ENCODE measurements at regions of chr20 and their contacts with region 1.

Region 1: GRCh38 chr20:3010985-3011723 is 32.3 kb upstream of the GNRH2 start:
- DNase-seq: peak; percentile 50
- H3K4me3 Mint-ChIP-seq: no peak overlapping the region
- H3K27ac Mint-ChIP-seq: peak overlapping the region; percentile 73
- H3K4me1 Mint-ChIP-seq: peaks cover 35% of the 10 kb centered on the region
- H3K27me3 Mint-ChIP-seq: no peaks in the 10 kb centered on the region

Region 2: GRCh38 chr20:2637246-2637645 is 373.9 kb before region 1 on chr20:
- CTCF ChIA-PET with region 1: no interaction called
- intact Hi-C with region 1: no loop called
- DNase-seq: no peak
- H3K4me3 Mint-ChIP-seq: no peak overlapping the region
- H3K27ac Mint-ChIP-seq: no peak overlapping the region
- H3K4me1 Mint-ChIP-seq: peaks cover 3% of the 10 kb centered on the region
- H3K27me3 Mint-ChIP-seq: no peaks in the 10 kb centered on the region

Region 3: DNA sequence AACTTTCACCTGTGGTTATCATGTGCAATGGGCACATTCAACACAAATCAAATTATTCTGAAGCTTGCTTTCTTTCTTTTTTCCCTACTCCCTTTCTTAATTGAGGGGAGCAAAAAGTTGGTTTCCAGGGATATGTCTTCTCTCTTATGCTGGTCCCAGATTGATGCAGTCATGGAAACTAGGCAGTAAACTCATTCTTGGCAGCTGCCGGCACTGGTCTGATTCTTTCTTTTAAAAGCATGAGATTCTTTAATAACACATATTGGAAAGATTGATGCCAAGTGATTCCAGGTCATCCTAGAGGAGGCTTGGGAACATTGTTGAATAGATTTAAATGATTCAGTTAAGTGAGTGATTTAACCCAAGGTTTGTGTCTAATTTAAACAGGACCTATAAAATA is 108.9 kb before region 1 on chr20:
- CTCF ChIA-PET with region 1: no interaction called
- intact Hi-C with region 1: no loop called
- DNase-seq: no peak
- H3K4me3 Mint-ChIP-seq: no peak overlapping the region
- H3K27ac Mint-ChIP-seq: no peak overlapping the region
- H3K4me1 Mint-ChIP-seq: peaks cover 36% of the 10 kb centered on the region
- H3K27me3 Mint-ChIP-seq: no peaks in the 10 kb centered on the region

Region 4: DNA sequence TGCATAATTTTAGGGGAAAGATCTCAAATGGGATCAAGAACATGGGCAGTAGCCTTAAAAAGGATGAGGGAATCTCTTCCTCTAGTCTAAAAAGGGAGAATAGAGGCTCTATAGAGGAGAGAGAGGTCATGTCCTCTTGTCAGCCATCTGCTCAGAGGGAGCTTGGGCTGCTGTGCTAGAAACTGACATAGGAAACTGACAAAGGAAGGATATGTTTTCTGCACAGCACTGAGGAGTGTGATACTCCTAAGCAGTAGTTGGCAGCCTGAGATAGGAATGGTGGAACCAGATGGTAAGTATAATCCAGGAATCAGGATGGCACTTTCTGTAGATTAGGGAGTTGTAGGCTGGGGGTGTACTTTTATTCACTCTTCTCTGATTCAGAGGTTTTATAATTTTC is 78.7 kb before region 1 on chr20:
- CTCF ChIA-PET with region 1: no interaction called
- intact Hi-C with region 1: no loop called
- DNase-seq: no peak
- H3K4me3 Mint-ChIP-seq: no peak overlapping the region
- H3K27ac Mint-ChIP-seq: no peak overlapping the region
- H3K4me1 Mint-ChIP-seq: no peaks in the 10 kb centered on the region
- H3K27me3 Mint-ChIP-seq: no peaks in the 10 kb centered on the region

Region 5: DNA sequence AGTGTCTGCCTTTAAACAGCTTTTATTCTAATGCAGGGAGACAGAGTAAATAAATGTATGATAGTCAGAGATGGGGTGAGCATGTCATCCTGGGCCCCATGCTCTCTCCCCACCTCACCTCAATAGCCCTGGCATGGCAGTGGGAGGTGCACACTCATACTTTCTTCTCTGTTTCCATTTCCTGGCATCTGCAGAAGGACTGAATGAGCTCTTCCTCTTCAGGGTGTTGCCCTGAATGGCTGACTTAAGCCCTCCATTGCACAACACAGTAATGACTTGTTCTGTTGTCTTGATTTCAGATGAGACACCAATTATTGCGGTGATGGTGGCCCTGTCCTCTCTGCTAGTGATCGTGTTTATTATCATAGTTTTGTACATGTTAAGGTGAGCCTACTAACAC is 24.7 kb before region 1 on chr20:
- CTCF ChIA-PET with region 1: interaction called, 3 read pairs
- intact Hi-C with region 1: loop called (anchors 1 kb)
- DNase-seq: peak; percentile 84
- H3K4me3 Mint-ChIP-seq: peak overlapping the region; percentile 2
- H3K27ac Mint-ChIP-seq: peak overlapping the region; percentile 89
- H3K4me1 Mint-ChIP-seq: peaks cover 2% of the 10 kb centered on the region
- H3K27me3 Mint-ChIP-seq: no peaks in the 10 kb centered on the region

Region 6: DNA sequence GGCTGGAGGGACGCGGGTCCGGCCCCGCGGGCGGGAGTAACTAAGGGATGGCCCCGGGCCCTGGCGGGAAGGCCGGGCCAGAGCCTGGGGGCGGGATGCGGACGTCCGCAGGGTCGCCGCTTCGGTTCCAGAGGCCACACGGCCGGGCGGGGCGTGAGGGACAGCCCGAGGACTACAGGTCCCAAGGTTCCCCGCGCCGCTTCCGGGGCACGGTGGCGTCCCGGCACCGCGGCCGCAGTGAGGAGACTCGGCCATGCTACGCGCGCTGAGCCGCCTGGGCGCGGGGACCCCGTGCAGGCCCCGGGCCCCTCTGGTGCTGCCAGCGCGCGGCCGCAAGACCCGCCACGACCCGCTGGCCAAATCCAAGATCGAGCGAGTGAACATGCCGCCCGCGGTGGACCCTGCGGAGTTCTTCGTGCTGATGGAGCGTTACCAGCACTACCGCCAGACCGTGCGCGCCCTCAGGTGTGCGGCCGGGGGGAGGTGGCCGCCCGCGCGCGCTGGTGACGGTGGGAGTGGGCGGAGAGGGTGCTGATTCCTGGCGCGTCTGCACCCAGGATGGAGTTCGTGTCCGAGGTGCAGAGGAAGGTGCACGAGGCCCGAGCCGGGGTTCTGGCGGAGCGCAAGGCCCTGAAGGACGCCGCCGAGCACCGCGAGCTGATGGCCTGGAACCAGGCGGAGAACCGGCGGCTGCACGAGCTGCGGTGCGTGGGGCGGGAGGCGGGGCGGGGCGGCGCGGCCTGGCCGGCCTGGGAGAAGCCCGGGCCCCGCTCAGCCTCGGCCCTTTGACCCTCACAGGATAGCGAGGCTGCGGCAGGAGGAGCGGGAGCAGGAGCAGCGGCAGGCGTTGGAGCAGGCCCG is 34.9 kb after region 1 on chr20 and contains the start of gene MRPS26:
- CTCF ChIA-PET with region 1: no interaction called
- intact Hi-C with region 1: loop called (anchors 1 kb)
- DNase-seq: peak; percentile 84
- H3K4me3 Mint-ChIP-seq: peak within 1 kb of the TSS; percentile 83
- H3K27ac Mint-ChIP-seq: peak within 1 kb of the TSS; percentile 60
- H3K4me1 Mint-ChIP-seq: peaks cover 23% of the 10 kb centered on the region
- H3K27me3 Mint-ChIP-seq: no peaks in the 10 kb centered on the region
- total RNA-seq, gene MRPS26: 50.0 to 52.4 TPM

Region 7: DNA sequence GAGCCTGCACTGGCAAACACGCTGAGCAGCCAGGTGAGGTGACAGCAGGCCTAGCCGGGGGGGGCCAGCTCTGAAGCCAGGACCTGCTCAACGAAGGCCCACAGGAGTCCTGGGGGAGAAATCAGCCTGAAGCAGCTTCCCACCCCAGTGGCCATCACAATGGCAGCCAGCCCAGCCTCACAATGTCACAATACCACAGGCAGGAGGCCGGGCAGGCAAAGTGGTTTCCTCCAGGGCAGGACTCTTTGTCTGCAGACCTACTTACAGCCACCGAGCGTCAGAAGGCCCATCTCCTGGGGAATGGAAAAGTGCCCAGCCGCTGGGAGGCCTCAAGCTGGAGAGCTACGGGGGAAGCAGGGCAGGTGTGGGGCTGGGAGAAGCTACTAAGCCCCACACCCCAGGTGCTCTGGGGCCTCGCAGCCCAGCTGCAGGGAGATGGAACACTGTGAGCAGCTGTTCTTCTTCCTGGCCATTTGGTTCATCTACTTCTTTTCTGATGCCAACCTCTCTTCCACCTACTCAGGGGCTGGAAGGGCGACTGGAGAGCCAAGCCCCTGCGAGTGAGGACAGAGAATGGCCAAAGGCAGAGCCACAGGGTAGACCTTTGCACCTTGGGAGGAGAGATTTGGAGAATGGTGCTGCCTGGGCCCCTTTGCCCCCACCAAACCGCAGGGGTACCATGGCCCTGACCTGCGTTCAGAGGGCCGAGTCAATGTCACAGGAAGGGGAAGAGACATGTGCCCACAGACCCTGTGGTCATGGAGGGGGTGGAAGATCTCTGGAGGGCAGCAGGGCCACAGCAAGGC is 95.7 kb after region 1 on chr20:
- CTCF ChIA-PET with region 1: no interaction called
- intact Hi-C with region 1: no loop called
- DNase-seq: no peak
- H3K4me3 Mint-ChIP-seq: no peak overlapping the region
- H3K27ac Mint-ChIP-seq: no peak overlapping the region
- H3K4me1 Mint-ChIP-seq: peaks cover 13% of the 10 kb centered on the region
- H3K27me3 Mint-ChIP-seq: no peaks in the 10 kb centered on the region

Measured in activated naive CD4-positive, alpha-beta T cell treated with anti-CD3 and anti-CD28 coated beads for 36 hours (primary cell).